Heart left ventricle (tissue), 16 donors: ENCODE measurements at regions of chr14 and their contacts with region 1.

Region 1: DNA sequence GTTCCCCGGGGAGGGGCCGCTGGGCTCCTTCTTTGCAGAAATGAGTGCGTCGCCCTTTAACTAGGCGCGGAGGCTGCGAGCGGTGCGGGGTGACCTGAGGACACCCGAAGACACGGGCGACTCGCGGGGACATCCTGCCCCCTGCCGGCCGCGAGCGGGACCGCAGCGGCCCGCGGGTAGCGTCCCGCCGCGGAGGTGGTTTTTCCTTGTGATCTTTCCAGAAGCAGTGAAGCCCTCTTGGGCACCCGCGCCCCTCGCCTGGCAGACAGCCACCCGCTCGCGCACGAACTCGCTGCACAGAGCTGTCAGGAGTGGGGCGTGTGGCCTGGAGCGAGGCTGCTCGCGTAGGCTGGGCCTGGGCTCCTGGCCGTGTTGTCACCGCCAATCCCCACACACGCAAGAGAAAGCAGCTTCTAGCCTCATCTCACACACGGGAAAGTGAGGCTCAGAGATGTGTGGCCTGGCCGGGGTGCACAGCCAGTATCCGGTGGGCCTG is 67.2 kb downstream of the DIO3 start:
- DNase-seq: peak; percentile 70 to 90 (median 78)
- ATAC-seq: peak; percentile 74 to 94 (median 90)
- H3K4me3 ChIP-seq: peak overlapping the region in 9 of 12 donors; percentile 18 to 48 (median 31)
- H3K27ac ChIP-seq: peak overlapping the region in 1 of 12 donors; percentile 18
- H3K4me1 ChIP-seq: peaks cover 0 to 12% (median 9%) of the 10 kb centered on the region in 12 donors
- H3K27me3 ChIP-seq: no peaks in the 10 kb centered on the region
- CTCF ChIP-seq: peak; percentile 98 to 100 (median 99)
- POLR2A ChIP-seq: no peak

Region 2: DNA sequence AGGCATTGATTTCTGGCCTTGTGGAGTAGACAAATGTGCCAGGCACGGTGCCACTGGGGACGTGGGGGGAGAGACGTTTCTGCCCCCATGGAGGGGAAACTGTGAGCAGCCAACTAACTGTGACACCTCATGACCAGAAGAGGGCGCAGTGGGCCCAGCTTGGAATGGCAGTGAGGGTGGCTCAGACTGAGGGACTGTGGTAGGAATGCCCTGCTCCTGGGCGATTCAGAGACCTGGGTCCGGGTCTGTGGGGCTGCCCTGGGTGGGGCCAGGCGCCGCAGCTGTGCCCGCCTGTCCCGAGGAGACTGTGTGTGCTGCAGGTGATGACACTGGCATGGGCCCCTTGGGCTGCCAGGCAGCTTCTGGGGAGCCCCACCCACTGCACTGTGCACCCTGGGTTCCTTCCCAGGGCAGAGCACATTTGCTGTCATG is 1244.8 kb before region 1 on chr14:
- intact Hi-C with region 1: loop called (anchors 2 to 5 kb)
- DNase-seq: peak; percentile 34 to 77 (median 56)
- ATAC-seq: peak; percentile 64 to 78 (median 74)
- H3K4me3 ChIP-seq: no peak overlapping the region
- H3K27ac ChIP-seq: no peak overlapping the region
- H3K4me1 ChIP-seq: peaks cover 0 to 9% (median 1%) of the 10 kb centered on the region in 12 donors
- H3K27me3 ChIP-seq: no peaks in the 10 kb centered on the region
- CTCF ChIP-seq: peak; percentile 66 to 85 (median 77)
- POLR2A ChIP-seq: no peak

Region 3: DNA sequence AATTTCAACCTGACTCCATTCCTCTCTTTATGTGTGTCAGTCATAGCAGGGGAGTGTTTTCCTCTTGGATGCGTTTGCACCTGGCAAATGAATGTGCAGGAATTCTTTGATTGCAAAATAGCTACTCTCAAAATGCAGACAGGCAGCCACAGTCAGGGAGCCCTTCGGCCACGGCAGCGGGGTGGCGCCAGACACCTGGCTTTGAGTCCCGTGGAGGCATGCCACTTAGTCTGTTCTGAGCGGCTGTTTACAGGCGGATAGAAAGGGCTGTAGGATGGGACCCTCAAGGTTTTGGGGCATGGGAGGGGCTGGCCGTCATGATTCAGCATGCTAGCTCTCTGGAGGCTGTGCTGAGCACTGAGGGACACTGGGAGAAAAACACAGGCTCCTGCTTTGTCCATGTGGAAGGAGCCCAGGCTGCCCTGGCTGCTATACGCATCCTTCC is 1188.3 kb before region 1 on chr14:
- intact Hi-C with region 1: loop called in 2 of 10 experiments (anchors 5 kb)
- DNase-seq: peak; percentile 26 to 73 (median 67)
- ATAC-seq: peak; percentile 83 to 92 (median 88)
- H3K4me3 ChIP-seq: peak overlapping the region in 2 of 12 donors; percentile 4 to 28
- H3K27ac ChIP-seq: peak overlapping the region in 11 of 12 donors; percentile 8 to 72 (median 40)
- H3K4me1 ChIP-seq: peaks cover 0 to 23% (median 19%) of the 10 kb centered on the region in 12 donors
- H3K27me3 ChIP-seq: no peaks in the 10 kb centered on the region
- CTCF ChIP-seq: peak; percentile 23 to 78 (median 62)
- POLR2A ChIP-seq: no peak

Region 4: DNA sequence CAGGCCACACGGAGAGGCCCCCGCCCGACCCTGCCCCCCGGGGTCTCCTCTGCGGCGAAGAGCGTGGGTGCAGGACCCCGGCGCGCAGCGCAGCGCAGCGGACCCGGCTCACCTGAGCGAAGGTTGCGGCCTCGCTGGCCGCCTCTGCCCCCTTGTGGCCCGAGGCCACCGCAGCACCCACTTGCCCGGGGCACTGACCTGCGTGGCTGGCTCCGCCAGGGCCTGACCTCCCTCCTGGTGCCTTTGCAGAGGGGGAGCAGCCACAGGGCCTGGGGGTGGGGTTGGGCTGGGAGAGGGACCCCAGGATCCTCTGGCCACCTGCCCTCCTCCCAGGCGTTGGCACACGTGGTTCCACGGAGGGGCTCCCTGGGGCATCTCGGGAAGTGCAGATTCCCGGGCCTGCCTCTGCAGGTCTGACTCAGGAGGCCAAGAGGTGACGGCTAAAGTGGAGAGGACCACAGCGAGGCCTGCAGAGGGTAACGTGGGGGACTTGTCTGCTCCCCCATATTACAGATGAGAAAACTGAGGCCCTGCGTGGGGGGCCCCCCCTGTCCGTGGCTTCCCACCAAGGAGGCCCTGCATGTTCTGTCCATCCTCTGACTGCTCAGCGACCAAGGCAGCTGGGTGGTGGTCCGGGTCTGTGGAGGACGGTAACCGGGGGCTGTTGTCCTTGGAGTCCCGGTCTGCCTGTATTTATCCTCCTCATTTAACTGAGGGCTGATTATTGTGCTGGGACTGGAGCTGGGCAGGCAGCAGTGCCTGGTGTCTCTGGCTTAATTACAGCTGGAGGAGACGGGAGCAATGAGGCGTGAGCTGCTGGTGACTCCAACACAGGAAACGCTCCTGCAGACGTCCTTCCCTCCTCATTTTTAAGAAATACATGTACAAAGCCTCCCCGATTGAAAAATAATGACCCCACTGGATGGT is 973.4 kb before region 1 on chr14:
- intact Hi-C with region 1: loop called in 9 of 10 experiments (anchors 5 to 10 kb)
- DNase-seq: peak in 1 of 5 donors; percentile 72
- ATAC-seq: peak in 3 of 4 donors; percentile 54 to 72 (median 67)
- H3K4me3 ChIP-seq: no peak overlapping the region
- H3K27ac ChIP-seq: no peak overlapping the region
- H3K4me1 ChIP-seq: no peaks in the 10 kb centered on the region
- H3K27me3 ChIP-seq: peaks cover 13 to 52% (median 29%) of the 10 kb centered on the region in 9 donors
- CTCF ChIP-seq: peak; percentile 30 to 71 (median 58)
- POLR2A ChIP-seq: no peak

Region 5: DNA sequence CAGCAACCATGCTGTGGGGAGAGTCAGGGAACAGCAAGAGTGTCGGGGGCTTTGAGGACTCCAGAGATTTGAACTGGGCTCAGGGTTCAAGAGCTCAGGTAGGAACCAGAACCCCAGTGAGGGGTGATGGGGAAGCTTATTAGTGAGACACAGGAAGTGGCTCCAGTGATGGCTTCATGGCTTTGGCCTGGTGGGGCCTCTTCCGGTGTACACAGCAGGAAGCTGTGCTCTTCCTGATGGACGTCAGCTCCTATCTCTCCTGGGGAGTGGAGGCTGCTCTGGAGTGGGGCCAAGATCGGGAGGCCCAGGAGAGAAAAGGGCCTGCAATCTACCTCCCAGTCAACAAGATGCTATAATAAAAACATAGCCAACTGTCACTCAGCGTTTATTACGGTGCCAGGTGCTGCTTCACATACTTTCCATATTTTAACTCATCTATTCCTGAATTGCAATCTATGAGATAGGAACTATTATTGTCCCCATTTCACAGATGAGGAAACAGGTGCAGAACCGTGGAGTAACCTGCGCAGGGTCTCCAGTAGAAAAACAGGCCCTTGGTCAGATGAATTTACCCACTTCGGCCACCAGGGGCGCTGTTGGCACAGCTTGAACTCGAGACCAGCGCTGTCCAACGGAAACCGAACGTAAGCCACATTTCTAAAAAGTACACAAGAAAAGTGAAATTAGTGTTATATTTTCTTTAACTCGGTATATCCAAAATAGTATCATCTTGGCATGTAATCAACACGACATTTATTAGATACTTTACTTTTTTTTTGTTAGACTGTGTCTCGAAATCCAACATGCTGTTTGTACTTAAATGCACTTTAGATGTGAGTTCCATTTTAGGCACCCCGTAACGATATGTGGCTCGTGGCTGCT is 965.4 kb before region 1 on chr14:
- intact Hi-C with region 1: loop called in 9 of 10 experiments (anchors 5 to 10 kb)
- DNase-seq: peak; percentile 53 to 81 (median 65)
- ATAC-seq: peak in 2 of 4 donors; percentile 59 to 62
- H3K4me3 ChIP-seq: no peak overlapping the region
- H3K27ac ChIP-seq: peak overlapping the region in 1 of 12 donors; percentile 23
- H3K4me1 ChIP-seq: peaks cover 0 to 16% (median 0%) of the 10 kb centered on the region in 12 donors
- H3K27me3 ChIP-seq: peaks cover 0 to 41% (median 4%) of the 10 kb centered on the region in 9 donors
- CTCF ChIP-seq: peak; percentile 77 to 99 (median 92)
- POLR2A ChIP-seq: no peak

Region 6: GRCh38 chr14:100850841-100851585 is 777.5 kb before region 1 on chr14:
- intact Hi-C with region 1: loop called in 3 of 10 experiments (anchors 2 to 5 kb)
- DNase-seq: peak; percentile 42 to 81 (median 58)
- ATAC-seq: peak; percentile 37 to 75 (median 67)
- H3K4me3 ChIP-seq: no peak overlapping the region
- H3K27ac ChIP-seq: no peak overlapping the region
- H3K4me1 ChIP-seq: peaks cover 0 to 3% (median 0%) of the 10 kb centered on the region in 12 donors
- H3K27me3 ChIP-seq: peaks cover 0 to 5% (median 0%) of the 10 kb centered on the region in 9 donors
- CTCF ChIP-seq: peak; percentile 33 to 89 (median 57)
- POLR2A ChIP-seq: no peak

Region 7: DNA sequence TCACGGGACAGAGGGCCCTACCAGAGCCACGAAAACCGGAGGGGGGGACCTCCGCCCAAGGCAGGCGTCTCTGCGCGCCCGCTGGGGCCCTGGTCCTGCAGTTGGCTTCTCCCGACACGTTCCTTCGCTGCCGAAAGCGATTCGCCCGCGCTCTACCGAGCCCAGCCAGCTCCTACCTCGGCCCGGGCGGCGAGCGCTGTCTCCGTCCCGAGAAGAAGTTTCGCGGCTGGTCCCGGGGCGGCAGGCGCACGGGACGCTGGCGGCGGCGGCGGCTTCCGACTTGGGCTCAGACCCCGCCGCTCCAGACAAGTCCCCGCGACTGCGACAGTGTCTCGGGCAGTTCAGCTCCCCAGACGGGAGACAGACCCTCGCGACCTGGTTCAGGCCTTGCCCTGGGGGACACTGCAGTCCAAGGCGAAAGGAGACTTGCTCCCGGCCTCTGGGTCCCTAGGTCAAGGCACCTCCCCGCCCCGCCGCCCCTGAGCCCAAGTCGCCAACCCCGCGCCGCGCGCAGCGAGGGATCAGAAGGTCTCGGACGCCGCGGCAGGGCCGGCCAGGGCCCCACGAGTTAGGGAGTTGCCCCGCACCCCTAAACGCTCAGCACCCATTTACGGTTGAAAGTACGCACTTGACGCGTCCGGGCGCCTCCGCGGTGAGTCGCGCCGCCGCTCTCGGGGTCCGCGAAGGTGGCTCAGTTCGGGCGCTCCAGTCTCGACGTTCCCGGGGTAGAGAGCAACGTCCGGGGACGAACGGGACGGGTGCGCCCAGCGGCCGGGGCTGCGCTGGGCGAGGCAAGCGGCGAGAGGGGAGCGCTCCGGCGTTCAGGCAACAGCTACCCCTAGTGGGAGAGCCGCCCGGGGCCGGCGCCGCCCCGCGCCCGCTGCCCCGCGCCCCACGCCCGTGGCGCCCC is 68.6 kb before region 1 on chr14:
- intact Hi-C with region 1: no loop called
- DNase-seq: peak in 1 of 5 donors; percentile 69
- ATAC-seq: peak in 3 of 4 donors; percentile 44 to 78 (median 56)
- H3K4me3 ChIP-seq: peak overlapping the region in 10 of 12 donors; percentile 23 to 51 (median 40)
- H3K27ac ChIP-seq: peak overlapping the region in 1 of 12 donors; percentile 62
- H3K4me1 ChIP-seq: peaks cover 0 to 22% (median under 1%) of the 10 kb centered on the region in 12 donors
- H3K27me3 ChIP-seq: peaks cover 37 to 84% (median 59%) of the 10 kb centered on the region in 9 donors
- CTCF ChIP-seq: peak in 6 of 12 donors; percentile 5 to 14 (median 9)
- POLR2A ChIP-seq: no peak

Region 8: GRCh38 chr14:101761032-101761880 is 132.7 kb after region 1 on chr14 and contains the start of gene PPP2R5C:
- intact Hi-C with region 1: no loop called
- DNase-seq: peak; percentile 94 to 97 (median 95)
- ATAC-seq: peak; percentile 73 to 89 (median 88)
- H3K4me3 ChIP-seq: peak within 1 kb of the TSS; percentile 65 to 100 (median 98)
- H3K27ac ChIP-seq: peak within 1 kb of the TSS; percentile 46 to 99 (median 95)
- H3K4me1 ChIP-seq: peaks cover 0 to 30% (median 11%) of the 10 kb centered on the region in 12 donors
- H3K27me3 ChIP-seq: no peaks in the 10 kb centered on the region
- CTCF ChIP-seq: no peak
- POLR2A ChIP-seq: peak in 1 of 2 donors; percentile 71
- total RNA-seq, gene PPP2R5C: 116 to 248 (median 207) TPM